AG04449 (cell line): ENCODE measurements at regions of chr11 and their contacts with region 1.

Region 1: GRCh38 chr11:44538375-44539054 is 26.9 kb upstream of the CD82 start:
- DNase-seq: no peak
- H3K4me3 ChIP-seq: no peak overlapping the region
- CTCF ChIP-seq: peak; percentile 95

Region 2: GRCh38 chr11:44083906-44084305 is 454.6 kb before region 1 on chr11:
- CTCF ChIA-PET with region 1: interaction called, 15 read pairs
- POLR2A ChIA-PET with region 1: no interaction called
- DNase-seq: no peak
- H3K4me3 ChIP-seq: no peak overlapping the region
- CTCF ChIP-seq: no peak

Region 3: GRCh38 chr11:44110231-44110679 is 428.3 kb before region 1 on chr11:
- CTCF ChIA-PET with region 1: interaction called, 50 read pairs
- POLR2A ChIA-PET with region 1: no interaction called
- DNase-seq: no peak
- H3K4me3 ChIP-seq: no peak overlapping the region
- CTCF ChIP-seq: peak; percentile 80

Region 4: GRCh38 chr11:44139565-44140330 is 398.8 kb before region 1 on chr11:
- CTCF ChIA-PET with region 1: interaction called, 93 read pairs
- POLR2A ChIA-PET with region 1: no interaction called
- DNase-seq: no peak
- H3K4me3 ChIP-seq: no peak overlapping the region
- CTCF ChIP-seq: no peak

Region 5: DNA sequence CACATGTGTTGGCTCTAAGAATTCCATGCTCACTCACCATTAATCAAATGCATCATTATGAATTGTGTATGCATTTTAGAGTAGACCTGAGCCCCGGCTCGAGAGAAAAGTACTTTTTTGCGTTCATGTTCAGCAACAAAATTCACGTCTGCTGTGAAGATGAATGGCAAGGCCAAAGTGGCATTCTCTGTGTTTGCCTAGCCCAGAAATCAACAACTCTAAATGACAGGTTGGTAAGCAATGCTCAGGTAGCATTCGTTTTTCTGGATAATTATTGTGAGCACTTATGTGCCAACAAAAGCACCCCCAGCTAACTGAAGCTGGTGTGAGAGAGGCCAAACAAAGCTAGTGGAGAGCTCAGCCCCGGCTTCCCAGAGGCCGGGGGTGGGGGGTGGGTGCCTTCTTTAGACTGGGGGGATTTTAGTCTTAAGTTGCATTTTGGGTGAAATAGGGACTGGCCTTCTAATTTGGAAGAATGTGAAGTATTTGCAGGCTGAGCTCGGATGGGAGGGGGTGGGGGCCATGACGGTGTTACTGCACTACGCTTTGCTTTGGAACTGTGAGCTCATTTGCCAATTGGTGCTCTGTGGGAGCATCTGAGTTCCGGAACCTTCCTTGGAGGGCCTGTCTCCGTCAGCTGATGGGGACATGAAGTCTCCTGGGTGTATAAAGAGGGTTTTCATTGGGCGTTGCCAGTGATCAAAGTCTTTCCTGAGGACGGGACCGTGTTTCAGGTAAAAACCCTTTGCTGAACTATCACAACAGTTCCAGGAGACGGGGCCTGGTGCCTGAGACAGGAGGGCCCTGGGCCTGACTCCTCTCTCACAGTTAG is 199.6 kb before region 1 on chr11:
- CTCF ChIA-PET with region 1: no interaction called
- POLR2A ChIA-PET with region 1: no interaction called
- DNase-seq: no peak
- H3K4me3 ChIP-seq: no peak overlapping the region
- CTCF ChIP-seq: no peak

Region 6: GRCh38 chr11:44524751-44525201 is 13.7 kb before region 1 on chr11:
- CTCF ChIA-PET with region 1: interaction called, 80 read pairs
- POLR2A ChIA-PET with region 1: no interaction called
- DNase-seq: no peak
- H3K4me3 ChIP-seq: no peak overlapping the region
- CTCF ChIP-seq: no peak